AG04449 (cell line): ENCODE measurements at regions of chr2 and their contacts with region 1.

Region 1: GRCh38 chr2:42086500-42086953 is 38.7 kb downstream of the PKDCC start:
- DNase-seq: no peak
- H3K4me3 ChIP-seq: no peak overlapping the region
- CTCF ChIP-seq: peak; percentile 57

Region 2: DNA sequence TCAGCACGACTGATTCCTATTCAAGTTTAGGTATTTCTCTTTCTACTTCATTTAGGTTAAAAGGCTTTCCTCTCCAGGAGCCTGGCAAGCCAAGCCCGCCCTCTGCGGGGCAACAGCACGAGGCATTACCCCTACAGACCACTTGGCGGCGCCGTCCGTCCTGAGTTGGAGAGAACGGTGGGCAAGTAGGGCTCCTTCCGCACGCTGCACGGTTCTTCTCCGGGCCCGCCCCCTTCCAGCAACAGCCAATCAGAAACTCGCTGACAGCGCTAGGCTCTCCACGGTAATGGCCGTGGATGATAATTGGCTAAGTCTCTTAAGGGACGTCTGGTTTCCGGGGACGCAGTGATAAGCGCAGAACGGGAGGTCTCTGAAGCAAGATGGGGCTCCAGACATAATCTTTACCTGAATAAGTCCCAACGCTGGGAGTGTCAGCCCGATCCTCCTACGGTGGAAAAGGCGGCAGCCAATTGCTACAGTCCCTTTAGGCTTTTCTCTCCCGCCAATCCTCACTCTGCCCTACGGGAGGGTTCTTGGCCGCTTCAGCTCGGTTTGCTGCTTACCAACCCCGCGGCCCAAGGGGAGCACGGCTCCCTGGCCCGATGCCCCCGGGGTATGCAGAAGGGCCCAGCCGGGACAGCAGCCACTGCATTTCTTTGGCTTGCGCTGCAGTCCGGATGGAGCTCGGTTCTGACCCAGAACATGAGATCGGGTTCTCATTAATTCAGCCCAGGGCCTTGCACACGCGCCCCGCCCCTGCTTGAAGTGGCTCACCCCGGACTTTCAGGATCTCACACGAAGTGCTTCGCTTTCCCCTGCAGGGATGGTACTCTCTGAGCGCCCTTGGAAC is 245.6 kb before region 1 on chr2:
- CTCF ChIA-PET with region 1: interaction called, 801 read pairs
- POLR2A ChIA-PET with region 1: no interaction called
- DNase-seq: peak; percentile 73
- H3K4me3 ChIP-seq: peak overlapping the region; percentile 78
- CTCF ChIP-seq: peak; percentile 98

Region 3: DNA sequence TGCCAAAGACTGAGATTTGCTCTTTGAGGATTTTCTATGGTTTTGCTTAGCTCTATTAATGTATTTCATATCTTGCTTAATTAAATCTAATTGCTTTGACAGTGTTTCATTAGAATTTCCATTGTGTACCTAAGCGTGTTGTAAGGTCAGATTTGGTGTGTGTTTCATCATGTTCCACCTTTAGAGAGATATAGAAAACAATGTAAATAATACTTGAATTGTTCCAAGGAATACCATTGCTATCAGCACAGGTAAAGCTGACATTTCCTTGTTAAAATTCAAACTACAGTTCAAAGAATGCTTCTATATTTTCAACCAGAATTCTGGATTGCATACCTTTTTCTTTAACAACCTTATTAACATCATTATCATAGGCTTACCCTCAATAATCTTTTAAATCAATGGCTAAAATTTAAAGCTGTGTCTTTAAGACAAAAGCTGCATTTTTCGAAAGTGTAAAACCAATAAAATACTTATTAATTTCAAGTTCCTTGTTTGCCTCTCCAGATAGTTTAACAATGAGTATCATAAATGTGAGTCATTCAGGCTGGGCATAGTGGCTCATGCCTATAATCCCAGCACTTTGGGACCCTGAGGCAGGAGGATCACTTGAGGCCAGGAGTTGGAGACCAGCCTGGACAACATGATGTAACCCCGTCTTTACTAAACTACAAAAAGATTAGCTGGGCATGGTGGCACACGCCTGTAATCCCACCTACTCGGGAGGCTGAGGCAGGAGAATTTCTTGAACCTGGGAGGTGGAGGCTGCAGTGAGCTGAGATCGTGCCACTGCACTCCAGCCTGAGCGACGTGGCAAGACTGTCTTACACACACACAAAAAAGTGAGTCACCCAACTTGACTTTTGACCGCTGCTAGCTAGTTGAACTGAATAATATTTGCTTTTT is 226.7 kb before region 1 on chr2:
- CTCF ChIA-PET with region 1: interaction called, 1,155 read pairs
- POLR2A ChIA-PET with region 1: no interaction called
- DNase-seq: no peak
- H3K4me3 ChIP-seq: no peak overlapping the region
- CTCF ChIP-seq: no peak

Region 4: DNA sequence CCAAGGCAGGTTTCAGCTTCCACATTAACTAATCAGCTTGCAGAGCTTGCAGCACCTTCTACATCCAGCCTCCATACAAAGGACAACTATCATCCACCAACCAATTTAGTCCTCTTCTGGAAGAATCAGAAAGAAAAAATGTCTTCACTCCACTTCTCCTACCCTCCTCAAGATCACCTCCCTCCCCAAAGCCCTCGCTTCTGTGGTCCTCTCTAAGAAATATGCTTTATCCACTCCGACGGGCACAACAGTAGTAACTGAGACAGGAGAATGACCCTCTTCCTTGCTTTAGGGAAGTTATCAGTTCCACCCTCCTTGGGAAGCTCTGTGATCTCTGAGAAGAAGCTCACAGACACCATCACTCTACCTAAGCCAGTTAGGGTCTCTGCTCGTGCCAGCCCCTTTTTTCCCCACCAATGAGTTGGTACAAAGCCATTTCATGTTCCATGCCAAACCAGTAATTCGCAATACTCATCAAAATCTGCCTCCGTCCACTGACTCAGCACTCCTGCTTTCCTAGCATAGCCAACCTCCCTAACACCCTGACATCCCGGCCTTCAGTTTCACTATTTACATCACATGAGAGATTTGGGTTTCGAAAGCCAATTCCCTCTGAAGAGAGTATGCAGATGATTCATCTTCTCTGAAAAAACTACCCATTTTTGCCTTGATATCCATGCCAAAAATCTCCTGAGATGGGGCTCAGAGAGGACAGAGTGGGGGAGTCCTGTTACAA is 152.8 kb before region 1 on chr2:
- CTCF ChIA-PET with region 1: interaction called, 10 read pairs
- POLR2A ChIA-PET with region 1: no interaction called
- DNase-seq: peak; percentile 74
- H3K4me3 ChIP-seq: no peak overlapping the region
- CTCF ChIP-seq: no peak

Region 5: GRCh38 chr2:42047488-42048298 is 38.8 kb before region 1 on chr2 and contains the start of gene PKDCC:
- CTCF ChIA-PET with region 1: interaction called, 13 read pairs
- POLR2A ChIA-PET with region 1: no interaction called
- DNase-seq: no peak
- H3K4me3 ChIP-seq: peak within 1 kb of the TSS; percentile 76
- CTCF ChIP-seq: no peak

Region 6: DNA sequence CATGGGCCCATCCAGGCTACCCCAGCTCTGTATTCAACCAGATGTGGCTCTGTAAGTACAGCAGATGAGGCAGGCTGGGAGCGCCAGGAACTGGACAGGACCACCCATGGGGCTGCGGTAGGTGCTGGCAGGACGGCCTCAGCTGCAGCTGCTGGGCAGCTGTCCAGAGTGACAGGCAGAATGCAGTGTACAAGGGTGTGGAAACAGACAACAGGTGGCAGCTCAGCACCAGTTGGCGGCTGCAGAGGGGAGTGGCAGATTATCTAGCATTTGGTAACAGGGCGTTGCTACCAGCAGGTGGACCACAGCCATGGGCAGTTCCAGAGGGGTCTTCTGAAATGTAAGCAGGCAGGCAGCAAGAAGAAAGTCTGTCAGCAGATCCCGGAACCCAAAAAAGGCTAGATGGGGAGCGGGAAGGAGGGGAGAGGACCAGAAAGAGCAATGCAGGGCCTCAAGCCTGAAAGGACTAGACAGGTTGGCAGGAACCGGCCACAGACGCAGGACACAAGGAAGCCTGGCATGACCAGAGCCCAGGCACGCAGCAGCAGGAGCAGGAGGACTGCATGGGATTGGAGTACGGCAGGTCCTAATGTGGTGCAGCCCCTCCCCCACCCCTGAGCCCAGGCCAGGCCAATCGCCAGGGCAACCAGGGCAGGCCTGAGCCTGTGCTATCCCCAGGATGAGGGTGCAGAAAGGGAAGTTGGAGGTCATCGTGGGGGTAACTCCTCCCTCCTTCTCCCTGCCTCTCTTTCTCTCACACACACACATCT is 14.0 kb before region 1 on chr2:
- CTCF ChIA-PET with region 1: interaction called, 108 read pairs
- POLR2A ChIA-PET with region 1: no interaction called
- DNase-seq: no peak
- H3K4me3 ChIP-seq: no peak overlapping the region
- CTCF ChIP-seq: no peak

Region 7: DNA sequence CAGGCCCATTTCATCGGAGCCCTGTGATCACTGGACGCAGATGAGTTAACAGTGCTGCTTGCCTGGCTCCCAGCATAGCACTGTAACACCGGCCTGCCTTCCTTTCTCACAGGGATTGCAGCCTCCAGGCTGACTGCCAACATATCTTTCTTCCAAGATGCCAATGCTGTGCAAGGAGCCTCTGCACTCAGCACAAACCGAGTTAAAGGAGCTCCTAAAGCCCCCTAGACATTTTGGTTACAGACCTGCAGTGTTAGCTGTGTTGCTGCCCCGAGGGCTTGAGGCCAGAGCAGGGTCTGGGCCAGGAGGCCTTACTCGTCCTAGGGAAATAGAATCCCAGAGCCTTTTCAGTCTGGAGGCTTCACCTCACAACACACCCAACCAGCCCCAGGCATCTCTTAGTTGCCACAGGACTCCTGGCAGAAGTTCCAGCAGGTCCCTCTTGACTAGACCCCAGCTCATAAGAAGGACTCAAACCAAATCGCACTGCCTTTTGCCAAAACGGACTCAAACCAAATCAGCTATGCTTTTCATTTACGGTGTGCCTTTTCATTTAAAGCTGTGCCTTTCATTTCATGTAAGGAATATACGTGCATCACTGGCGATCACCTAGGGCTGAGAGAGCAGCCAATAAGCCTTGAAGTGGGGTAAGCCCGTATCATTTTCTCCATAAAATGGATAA is 24.3 kb after region 1 on chr2:
- CTCF ChIA-PET with region 1: no interaction called
- POLR2A ChIA-PET with region 1: no interaction called
- DNase-seq: no peak
- H3K4me3 ChIP-seq: no peak overlapping the region
- CTCF ChIP-seq: no peak

Region 8: GRCh38 chr2:42132966-42133641 is 46.6 kb after region 1 on chr2:
- CTCF ChIA-PET with region 1: no interaction called
- POLR2A ChIA-PET with region 1: no interaction called
- DNase-seq: peak; percentile 86
- H3K4me3 ChIP-seq: peak overlapping the region; percentile 46
- CTCF ChIP-seq: no peak

Region 9: GRCh38 chr2:42342061-42342794 is 255.7 kb after region 1 on chr2:
- CTCF ChIA-PET with region 1: interaction called, 10 read pairs
- POLR2A ChIA-PET with region 1: no interaction called
- DNase-seq: peak; percentile 70
- H3K4me3 ChIP-seq: no peak overlapping the region
- CTCF ChIP-seq: no peak